Calu3 (cell line): ENCODE measurements at regions of chr12 and their contacts with region 1.

Region 1: DNA sequence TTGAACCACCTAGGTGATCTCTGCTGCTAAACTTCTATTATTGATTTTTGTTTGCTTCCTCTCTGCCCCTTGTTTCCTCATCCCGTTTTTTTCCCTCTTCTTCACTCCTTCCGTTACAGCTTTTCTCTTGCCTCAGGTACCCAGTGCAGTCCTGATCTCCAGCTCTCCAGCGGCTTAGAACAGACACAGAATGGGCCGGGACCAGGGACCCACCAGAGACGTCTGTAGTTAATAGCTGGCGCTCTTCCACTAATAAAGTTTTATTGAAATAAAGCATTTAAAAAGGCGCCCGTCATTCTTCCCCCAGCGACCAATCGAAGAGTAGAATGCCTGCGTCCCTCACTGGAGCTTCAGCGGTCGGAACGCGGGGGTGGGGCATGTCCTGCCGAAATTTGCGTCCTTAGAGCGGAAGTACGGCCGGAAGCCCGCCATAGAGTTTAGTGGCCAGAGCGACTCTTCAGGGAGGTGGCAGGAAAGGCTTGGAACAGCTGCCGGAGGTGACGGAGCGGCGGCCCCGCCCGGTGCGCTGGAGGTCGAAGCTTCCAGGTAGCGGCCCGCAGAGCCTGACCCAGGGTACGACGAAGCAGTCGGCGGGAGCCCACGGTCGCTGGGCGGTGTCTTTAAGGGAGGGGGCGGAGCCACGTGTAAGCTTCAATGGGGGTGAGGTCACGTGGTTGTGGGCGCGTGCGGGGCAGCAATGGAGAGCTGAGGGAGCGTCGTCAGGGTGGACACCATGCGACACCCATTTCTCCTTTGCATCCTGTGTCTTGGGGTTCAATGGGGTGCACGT is at the start of gene COPS7A:
- DNase-seq: peak; percentile 97
- H3K4me3 Mint-ChIP-seq: peak within 1 kb of the TSS; percentile 77
- H3K27ac Mint-ChIP-seq: peak within 1 kb of the TSS; percentile 72
- H3K4me1 Mint-ChIP-seq: peaks cover 15% of the 10 kb centered on the region
- H3K27me3 Mint-ChIP-seq: peaks cover 10% of the 10 kb centered on the region
- CTCF ChIP-seq: no peak
- total RNA-seq, gene COPS7A: 47.3 and 55.3 TPM in 2 replicates

Region 2: GRCh38 chr12:6582196-6582595 is 141.6 kb before region 1 on chr12:
- CTCF ChIA-PET with region 1: no interaction called
- intact Hi-C with region 1: no loop called
- DNase-seq: no peak
- H3K4me3 Mint-ChIP-seq: no peak overlapping the region
- H3K27ac Mint-ChIP-seq: no peak overlapping the region
- H3K4me1 Mint-ChIP-seq: peaks cover 2% of the 10 kb centered on the region
- H3K27me3 Mint-ChIP-seq: no peaks in the 10 kb centered on the region
- CTCF ChIP-seq: no peak

Region 3: DNA sequence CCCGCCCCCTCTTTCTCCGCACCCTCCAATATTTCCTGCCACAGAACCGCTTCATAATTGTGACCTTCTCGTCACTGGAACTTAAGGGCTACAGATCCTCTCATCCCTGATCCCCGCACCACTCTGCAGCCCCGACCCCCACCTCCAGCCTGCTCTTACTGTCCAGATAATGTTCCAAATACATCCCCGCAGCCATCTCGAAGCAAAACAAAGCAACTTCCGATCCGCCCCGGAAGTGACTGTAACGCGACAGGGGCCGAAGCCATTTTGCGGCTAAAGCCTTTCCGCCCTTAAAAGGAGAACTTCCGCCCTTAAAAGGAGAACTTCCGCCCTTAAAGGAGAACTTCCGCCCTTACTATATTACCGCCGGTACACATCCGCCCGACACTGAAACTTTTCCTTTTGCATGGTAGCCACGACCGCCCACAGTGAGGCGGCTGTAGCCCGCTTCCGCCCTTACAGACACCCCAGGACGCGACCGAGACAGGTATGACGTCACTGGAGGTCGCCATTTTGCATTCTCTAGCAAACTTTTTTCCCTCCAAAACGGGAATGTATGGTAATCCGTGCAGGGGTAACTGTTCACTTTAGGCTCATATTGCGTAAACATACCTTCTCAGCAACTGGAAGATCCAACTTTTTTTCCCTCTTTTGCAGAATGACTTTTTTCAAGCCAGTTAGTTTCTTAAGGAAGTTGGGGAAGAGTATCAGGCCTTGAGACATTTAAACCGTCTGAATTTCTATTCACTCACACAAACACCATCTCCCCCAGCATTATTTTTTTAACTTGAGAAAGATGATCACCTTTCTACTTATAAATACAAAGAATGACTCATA is 60.7 kb before region 1 on chr12 and contains the start of gene ING4:
- CTCF ChIA-PET with region 1: no interaction called
- intact Hi-C with region 1: loop called (anchors 5 kb)
- DNase-seq: peak; percentile 94
- H3K4me3 Mint-ChIP-seq: peak within 1 kb of the TSS; percentile 86
- H3K27ac Mint-ChIP-seq: peak within 1 kb of the TSS; percentile 92
- H3K4me1 Mint-ChIP-seq: peaks cover 10% of the 10 kb centered on the region
- H3K27me3 Mint-ChIP-seq: no peaks in the 10 kb centered on the region
- CTCF ChIP-seq: no peak
- total RNA-seq, gene ING4: 24.9 and 26.6 TPM in 2 replicates

Region 4: GRCh38 chr12:6688999-6689882 is 34.6 kb before region 1 on chr12 and contains the start of gene ZNF384:
- CTCF ChIA-PET with region 1: interaction called, 14 read pairs
- intact Hi-C with region 1: no loop called
- DNase-seq: peak; percentile 93
- H3K4me3 Mint-ChIP-seq: peak within 1 kb of the TSS; percentile 71
- H3K27ac Mint-ChIP-seq: peak within 1 kb of the TSS; percentile 76
- H3K4me1 Mint-ChIP-seq: peaks cover 25% of the 10 kb centered on the region
- H3K27me3 Mint-ChIP-seq: peaks cover 16% of the 10 kb centered on the region
- CTCF ChIP-seq: no peak
- total RNA-seq, gene ZNF384: 64.9 and 68.5 TPM in 2 replicates

Region 5: GRCh38 chr12:6773590-6774351 is 50.0 kb after region 1 on chr12:
- CTCF ChIA-PET with region 1: interaction called, 10 read pairs
- intact Hi-C with region 1: no loop called
- DNase-seq: no peak
- H3K4me3 Mint-ChIP-seq: peak overlapping the region; percentile 10
- H3K27ac Mint-ChIP-seq: no peak overlapping the region
- H3K4me1 Mint-ChIP-seq: peaks cover 26% of the 10 kb centered on the region
- H3K27me3 Mint-ChIP-seq: peaks cover 75% of the 10 kb centered on the region
- CTCF ChIP-seq: no peak